Activated CD4-positive, alpha-beta T cell treated with anti-CD3 and anti-CD28 coated beads, Interleukin-2, amount 10 ng/mL, durations not matched to agents 24 days and 14 days (primary cell): ENCODE measurements at regions of chr6 and their contacts with region 1.

Region 1: GRCh38 chr6:157314705-157315321 is 8.5 kb downstream of the TMEM242 start:
- DNase-seq: peak; percentile 82
- H3K4me3 Mint-ChIP-seq: no peak overlapping the region
- H3K27ac Mint-ChIP-seq: no peak overlapping the region
- H3K4me1 Mint-ChIP-seq: peaks cover 11% of the 10 kb centered on the region
- H3K27me3 Mint-ChIP-seq: no peaks in the 10 kb centered on the region

Region 2: DNA sequence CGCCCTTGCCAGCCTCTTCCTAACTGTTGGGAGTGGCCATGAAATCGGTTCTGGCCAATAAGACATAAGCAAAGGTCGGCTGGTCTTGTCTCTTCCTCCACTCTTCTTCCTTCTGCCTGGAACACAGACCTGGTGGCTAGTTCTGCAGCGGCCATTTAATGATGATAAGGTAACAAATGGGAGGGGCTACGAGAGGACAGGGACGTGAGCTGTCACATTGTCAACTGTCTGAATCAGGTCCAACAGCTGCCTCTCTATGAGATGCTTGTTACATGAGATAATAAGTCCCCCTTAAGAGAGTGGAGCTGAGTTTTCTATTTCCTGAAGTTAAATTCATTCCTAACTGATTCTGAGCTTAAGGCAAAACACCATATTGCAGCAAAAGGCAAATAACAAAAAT is 21.0 kb after region 1 on chr6:
- intact Hi-C with region 1: loop called (anchors 1 kb)
- DNase-seq: no peak
- H3K4me3 Mint-ChIP-seq: no peak overlapping the region
- H3K27ac Mint-ChIP-seq: no peak overlapping the region
- H3K4me1 Mint-ChIP-seq: no peaks in the 10 kb centered on the region
- H3K27me3 Mint-ChIP-seq: peaks cover 55% of the 10 kb centered on the region

Region 3: DNA sequence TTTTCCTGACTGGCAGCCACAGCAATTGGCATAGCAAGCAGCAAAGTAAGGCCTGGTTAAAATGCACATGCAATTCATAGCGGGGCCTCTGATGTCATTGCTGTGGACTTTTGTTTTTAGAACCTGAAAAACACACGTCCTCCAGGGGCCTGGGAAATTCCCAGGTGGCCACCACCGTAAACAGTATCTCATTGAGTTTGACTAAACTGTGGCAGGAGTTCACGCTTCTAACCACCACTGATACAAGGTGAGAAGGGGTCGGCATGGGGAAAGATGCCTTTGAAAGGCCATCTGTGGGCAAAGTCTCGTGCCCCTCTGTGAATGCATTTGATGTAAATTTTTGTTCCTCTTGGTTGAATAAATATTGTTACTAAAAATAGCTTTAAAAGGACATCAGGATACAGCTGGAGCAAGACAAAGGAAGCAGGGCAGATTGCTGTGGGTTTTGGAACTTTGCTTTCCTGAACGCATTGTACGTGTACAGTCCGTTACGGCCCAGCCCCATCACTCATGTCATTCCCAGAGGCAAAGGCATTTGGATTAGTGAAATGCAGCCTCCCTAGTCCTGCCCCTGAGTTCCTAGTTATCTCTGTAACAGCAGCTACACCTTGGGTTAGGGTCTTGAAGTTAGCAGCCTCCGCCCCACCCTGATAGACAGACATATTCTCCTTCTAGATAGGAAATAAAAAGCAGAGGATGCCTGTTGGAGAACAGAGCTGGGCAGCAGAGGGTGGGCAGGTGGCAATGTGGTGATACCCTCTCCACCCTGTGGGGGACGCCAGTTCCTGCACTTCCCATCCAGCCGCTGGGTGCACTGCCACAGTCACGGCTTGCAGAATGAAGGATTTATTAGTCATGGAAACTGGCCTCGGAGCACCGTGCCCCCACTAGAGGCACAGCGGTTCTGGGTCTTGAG is 146.4 kb after region 1 on chr6:
- intact Hi-C with region 1: no loop called
- DNase-seq: peak; percentile 91
- H3K4me3 Mint-ChIP-seq: peak overlapping the region; percentile 48
- H3K27ac Mint-ChIP-seq: peak overlapping the region; percentile 97
- H3K4me1 Mint-ChIP-seq: peaks cover 64% of the 10 kb centered on the region
- H3K27me3 Mint-ChIP-seq: no peaks in the 10 kb centered on the region

Region 4: GRCh38 chr6:157597446-157598312 is 282.9 kb after region 1 on chr6:
- intact Hi-C with region 1: loop called (anchors 1 kb)
- DNase-seq: peak; percentile 80
- H3K4me3 Mint-ChIP-seq: no peak overlapping the region
- H3K27ac Mint-ChIP-seq: no peak overlapping the region
- H3K4me1 Mint-ChIP-seq: peaks cover 4% of the 10 kb centered on the region
- H3K27me3 Mint-ChIP-seq: no peaks in the 10 kb centered on the region

Region 5: GRCh38 chr6:157667211-157668008 is 352.6 kb after region 1 on chr6:
- intact Hi-C with region 1: loop called (anchors 1 kb)
- DNase-seq: peak; percentile 87
- H3K4me3 Mint-ChIP-seq: no peak overlapping the region
- H3K27ac Mint-ChIP-seq: peak overlapping the region; percentile 9
- H3K4me1 Mint-ChIP-seq: peaks cover 14% of the 10 kb centered on the region
- H3K27me3 Mint-ChIP-seq: peaks cover 7% of the 10 kb centered on the region

Region 6: GRCh38 chr6:158072083-158072721 is 757.4 kb after region 1 on chr6:
- intact Hi-C with region 1: loop called (anchors 5 kb)
- DNase-seq: peak; percentile 90
- H3K4me3 Mint-ChIP-seq: no peak overlapping the region
- H3K27ac Mint-ChIP-seq: peak overlapping the region; percentile 19
- H3K4me1 Mint-ChIP-seq: peaks cover 33% of the 10 kb centered on the region
- H3K27me3 Mint-ChIP-seq: no peaks in the 10 kb centered on the region